ENCODE measurements at regions of chr20 and their contacts with region 1.

Region 1: DNA sequence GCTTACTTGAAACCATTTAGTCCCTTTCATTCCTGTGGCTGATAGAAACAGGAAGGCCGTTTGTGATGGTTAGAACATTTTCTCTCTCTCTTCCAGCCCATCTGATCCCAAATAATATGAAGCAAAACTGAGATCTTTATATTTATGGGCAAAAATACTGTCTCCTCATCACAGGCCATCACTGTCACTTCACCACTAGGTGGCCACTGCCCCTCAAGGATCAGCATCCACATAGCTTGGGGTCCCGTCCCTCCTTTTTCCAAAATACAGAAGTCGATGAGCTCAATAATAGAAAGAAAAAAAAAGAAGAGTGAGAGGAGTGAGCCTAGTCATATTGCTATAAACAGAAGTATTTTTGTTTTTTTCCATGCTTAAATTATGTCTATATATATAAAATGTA is 46.4 kb upstream of the LAMP5 start:
- DNase-seq: no peak
- ATAC-seq: no peak
- H3K4me3 Mint-ChIP-seq: no peak overlapping the region
- H3K27ac Mint-ChIP-seq: no peak overlapping the region
- H3K4me1 Mint-ChIP-seq: no peaks in the 10 kb centered on the region
- H3K27me3 Mint-ChIP-seq: no peaks in the 10 kb centered on the region
- CTCF ChIP-seq: no peak

Region 2: GRCh38 chr20:9392892-9393857 is 74.8 kb before region 1 on chr20:
- CTCF ChIA-PET with region 1: no interaction called
- POLR2A ChIA-PET with region 1: no interaction called
- intact Hi-C with region 1: no loop called
- DNase-seq: no peak
- ATAC-seq: no peak
- H3K4me3 Mint-ChIP-seq: no peak overlapping the region
- H3K27ac Mint-ChIP-seq: no peak overlapping the region
- H3K4me1 Mint-ChIP-seq: peaks cover 5% of the 10 kb centered on the region
- H3K27me3 Mint-ChIP-seq: no peaks in the 10 kb centered on the region
- CTCF ChIP-seq: no peak

Region 3: DNA sequence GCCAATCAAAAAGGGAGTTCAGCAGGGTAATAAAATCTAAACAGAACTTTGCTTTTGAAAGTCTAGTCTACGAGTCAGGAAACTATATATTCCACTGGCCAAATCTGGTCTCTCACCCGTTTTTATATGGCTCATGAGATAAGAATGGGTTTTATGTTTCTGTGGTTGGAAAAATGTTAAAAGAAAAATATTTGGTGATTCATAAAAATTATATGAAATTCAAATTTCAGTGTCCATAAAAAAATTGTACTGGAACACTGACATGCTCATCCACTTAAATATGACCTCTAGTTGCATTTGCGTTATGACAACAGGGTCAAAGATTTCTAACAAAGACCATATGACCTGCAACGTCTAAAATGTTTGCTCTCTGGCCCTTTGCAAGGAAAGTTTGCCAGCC is 24.1 kb after region 1 on chr20:
- CTCF ChIA-PET with region 1: no interaction called
- POLR2A ChIA-PET with region 1: no interaction called
- intact Hi-C with region 1: no loop called
- DNase-seq: no peak
- ATAC-seq: no peak
- H3K4me3 Mint-ChIP-seq: no peak overlapping the region
- H3K27ac Mint-ChIP-seq: no peak overlapping the region
- H3K4me1 Mint-ChIP-seq: no peaks in the 10 kb centered on the region
- H3K27me3 Mint-ChIP-seq: peaks cover 8% of the 10 kb centered on the region
- CTCF ChIP-seq: no peak

Region 4: GRCh38 chr20:9590189-9590588 is 122.2 kb after region 1 on chr20:
- CTCF ChIA-PET with region 1: no interaction called
- POLR2A ChIA-PET with region 1: no interaction called
- intact Hi-C with region 1: no loop called
- DNase-seq: no peak
- ATAC-seq: no peak
- H3K4me3 Mint-ChIP-seq: no peak overlapping the region
- H3K27ac Mint-ChIP-seq: no peak overlapping the region
- H3K4me1 Mint-ChIP-seq: no peaks in the 10 kb centered on the region
- H3K27me3 Mint-ChIP-seq: peaks cover 2% of the 10 kb centered on the region
- CTCF ChIP-seq: no peak

Region 5: GRCh38 chr20:9609887-9610502 is 142.0 kb after region 1 on chr20:
- CTCF ChIA-PET with region 1: interaction called, 4 read pairs
- POLR2A ChIA-PET with region 1: no interaction called
- intact Hi-C with region 1: loop called (anchors 1 kb)
- DNase-seq: no peak
- ATAC-seq: no peak
- H3K4me3 Mint-ChIP-seq: no peak overlapping the region
- H3K27ac Mint-ChIP-seq: no peak overlapping the region
- H3K4me1 Mint-ChIP-seq: no peaks in the 10 kb centered on the region
- H3K27me3 Mint-ChIP-seq: peaks cover 2% of the 10 kb centered on the region
- CTCF ChIP-seq: no peak